ENCODE measurements at regions of chr2 and their contacts with region 1.

Region 1: DNA sequence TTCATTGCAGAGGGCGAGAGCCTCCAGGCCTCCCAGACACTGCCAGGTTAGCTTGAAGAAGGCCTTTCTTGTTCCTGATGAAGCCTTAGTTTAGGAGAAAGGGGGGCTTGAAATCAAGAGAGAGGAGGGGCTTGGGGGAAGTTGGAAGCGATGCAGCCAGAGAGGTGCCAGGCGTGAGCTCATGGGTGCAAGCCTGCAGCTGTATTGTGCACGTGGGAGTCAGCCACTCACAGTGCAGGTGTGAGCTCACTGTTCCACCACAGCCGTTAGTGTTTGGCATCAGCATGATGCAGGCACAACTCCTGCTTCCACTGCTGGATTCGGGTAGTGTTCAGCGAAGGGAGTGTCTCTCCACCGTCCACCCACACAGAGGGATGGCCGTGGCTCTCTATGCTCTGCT is 68.4 kb upstream of the ALPP start:
- DNase-seq: no peak
- ATAC-seq: peak; percentile 57
- H3K4me3 Mint-ChIP-seq: peak overlapping the region; percentile 54
- H3K27ac Mint-ChIP-seq: peak overlapping the region; percentile 89
- H3K4me1 Mint-ChIP-seq: peaks cover 68% of the 10 kb centered on the region
- H3K27me3 Mint-ChIP-seq: no peaks in the 10 kb centered on the region

Region 2: GRCh38 chr2:232230557-232230956 is 79.6 kb before region 1 on chr2:
- POLR2A ChIA-PET with region 1: no interaction called
- DNase-seq: no peak
- ATAC-seq: no peak
- H3K4me3 Mint-ChIP-seq: no peak overlapping the region
- H3K27ac Mint-ChIP-seq: no peak overlapping the region
- H3K4me1 Mint-ChIP-seq: peaks cover 18% of the 10 kb centered on the region
- H3K27me3 Mint-ChIP-seq: no peaks in the 10 kb centered on the region

Region 3: DNA sequence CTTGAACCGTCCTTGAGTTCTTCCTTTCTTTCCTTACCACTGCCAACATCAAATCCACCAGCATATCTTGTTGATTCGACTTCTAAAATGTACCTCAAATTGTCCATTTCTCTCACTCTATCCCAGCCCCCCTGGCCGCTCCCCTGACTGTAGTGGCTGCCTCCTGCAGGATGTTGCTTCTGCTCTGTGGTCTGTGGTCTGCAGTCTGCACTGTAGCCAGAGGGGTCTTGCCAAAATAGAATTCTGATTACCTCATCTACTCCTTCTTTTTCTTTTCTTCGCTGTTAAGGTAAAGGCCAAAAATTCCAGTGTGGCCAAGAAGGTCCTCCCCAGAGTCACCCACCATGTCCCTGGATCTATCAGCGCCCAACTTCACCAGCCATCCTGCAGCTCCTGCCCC is 11.0 kb before region 1 on chr2:
- POLR2A ChIA-PET with region 1: interaction called, 24 read pairs
- DNase-seq: no peak
- ATAC-seq: peak; percentile 74
- H3K4me3 Mint-ChIP-seq: peak overlapping the region; percentile 68
- H3K27ac Mint-ChIP-seq: peak overlapping the region; percentile 65
- H3K4me1 Mint-ChIP-seq: peaks cover 28% of the 10 kb centered on the region
- H3K27me3 Mint-ChIP-seq: no peaks in the 10 kb centered on the region

Measured in activated naive CD8-positive, alpha-beta T cell treated with anti-CD3 and anti-CD28 coated beads, Interleukin-2, amount 10 ng/mL, durations not matched to agents 7 days and 5 days (primary cell).